ENCODE measurements at regions of chr12 and their contacts with region 1.

Region 1: GRCh38 chr12:100877776-100878175 is 83.2 kb downstream of the ANO4 start:
- DNase-seq: no peak
- H3K4me3 ChIP-seq: no peak overlapping the region
- H3K27ac ChIP-seq: no peak overlapping the region
- H3K4me1 ChIP-seq: no peaks in the 10 kb centered on the region
- H3K27me3 ChIP-seq: no peaks in the 10 kb centered on the region
- CTCF ChIP-seq: peak in 2 of 3 experiments; percentile 16 to 50; a peak in 2 of 4 replicates
- EP300 ChIP-seq: no peak
- POLR2A ChIP-seq: no peak
- RAD21 ChIP-seq: no peak

Region 2: DNA sequence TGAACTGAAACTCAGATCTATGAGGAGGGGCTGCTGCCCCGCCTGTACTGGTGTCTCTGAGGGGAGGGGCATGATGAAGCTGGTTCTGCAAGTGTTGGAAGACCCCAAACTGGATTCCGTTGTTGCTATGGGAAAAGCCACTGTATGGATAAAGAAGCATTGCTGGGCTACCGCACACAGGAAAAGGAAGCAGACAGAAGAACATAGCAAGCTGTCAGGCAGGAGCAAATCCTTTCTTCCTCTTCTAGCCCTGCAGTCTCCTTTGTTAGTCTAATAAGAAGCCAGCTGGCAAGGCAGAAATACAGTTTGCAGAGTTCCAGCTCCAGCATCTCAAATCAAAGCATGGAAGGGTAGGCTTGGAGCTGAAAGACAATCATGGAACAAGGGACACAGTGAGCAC is 430.4 kb before region 1 on chr12:
- CTCF ChIA-PET with region 1: no interaction called
- POLR2A ChIA-PET with region 1: no interaction called
- DNase-seq: no peak
- H3K4me3 ChIP-seq: no peak overlapping the region
- H3K27ac ChIP-seq: no peak overlapping the region
- H3K4me1 ChIP-seq: peaks cover 0 to 6% (median 0%) of the 10 kb centered on the region in 4 experiments; a peak in 2 of 7 replicates
- H3K27me3 ChIP-seq: no peaks in the 10 kb centered on the region
- CTCF ChIP-seq: no peak
- EP300 ChIP-seq: no peak
- POLR2A ChIP-seq: no peak
- RAD21 ChIP-seq: no peak

Region 3: DNA sequence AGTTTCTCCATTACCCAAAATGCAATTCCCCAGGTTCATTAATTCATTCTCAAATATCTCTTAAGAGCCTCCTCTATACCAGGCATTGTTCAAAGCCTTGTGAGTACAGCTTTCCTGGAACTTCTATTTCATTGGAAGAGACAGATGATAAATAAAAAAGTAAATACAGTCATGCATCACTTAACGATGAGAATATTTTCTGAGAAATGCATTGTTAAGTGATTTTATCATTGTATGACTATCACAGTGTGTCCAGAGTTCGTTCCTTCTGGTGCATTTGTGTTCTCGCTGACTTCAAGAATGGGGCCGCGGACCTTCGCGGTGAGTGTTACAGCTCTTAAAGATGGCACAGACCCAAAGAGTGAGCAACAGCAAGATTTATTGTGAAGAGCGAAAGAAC is 17.2 kb before region 1 on chr12:
- CTCF ChIA-PET with region 1: interaction called, 58 read pairs
- POLR2A ChIA-PET with region 1: no interaction called
- DNase-seq: no peak
- H3K4me3 ChIP-seq: no peak overlapping the region
- H3K27ac ChIP-seq: no peak overlapping the region
- H3K4me1 ChIP-seq: no peaks in the 10 kb centered on the region
- H3K27me3 ChIP-seq: no peaks in the 10 kb centered on the region
- CTCF ChIP-seq: no peak
- EP300 ChIP-seq: no peak
- POLR2A ChIP-seq: no peak
- RAD21 ChIP-seq: no peak

Region 4: DNA sequence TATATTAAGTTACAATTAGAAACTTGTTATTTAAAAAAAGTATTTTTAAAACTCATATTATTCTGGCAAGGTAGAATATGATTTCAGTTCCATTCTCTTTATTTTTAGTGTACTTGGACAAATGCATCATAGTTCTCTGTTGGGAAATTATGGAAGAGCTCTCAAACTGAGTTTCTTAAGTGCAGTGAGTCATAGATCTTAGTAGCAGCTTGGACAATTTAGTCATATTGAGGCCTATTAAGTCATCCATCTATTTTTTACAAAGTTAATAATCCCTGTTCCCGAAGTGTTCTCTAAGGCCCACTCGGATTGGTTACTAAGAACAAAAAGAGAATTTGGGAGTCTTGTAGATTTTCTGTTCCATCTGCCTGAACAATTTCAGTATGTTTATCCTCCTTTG is 30.7 kb after region 1 on chr12:
- CTCF ChIA-PET with region 1: interaction called, 13 read pairs
- POLR2A ChIA-PET with region 1: no interaction called
- DNase-seq: no peak
- H3K4me3 ChIP-seq: no peak overlapping the region
- H3K27ac ChIP-seq: no peak overlapping the region
- H3K4me1 ChIP-seq: no peaks in the 10 kb centered on the region
- H3K27me3 ChIP-seq: no peaks in the 10 kb centered on the region
- CTCF ChIP-seq: no peak
- EP300 ChIP-seq: no peak
- POLR2A ChIP-seq: no peak
- RAD21 ChIP-seq: no peak

Region 5: DNA sequence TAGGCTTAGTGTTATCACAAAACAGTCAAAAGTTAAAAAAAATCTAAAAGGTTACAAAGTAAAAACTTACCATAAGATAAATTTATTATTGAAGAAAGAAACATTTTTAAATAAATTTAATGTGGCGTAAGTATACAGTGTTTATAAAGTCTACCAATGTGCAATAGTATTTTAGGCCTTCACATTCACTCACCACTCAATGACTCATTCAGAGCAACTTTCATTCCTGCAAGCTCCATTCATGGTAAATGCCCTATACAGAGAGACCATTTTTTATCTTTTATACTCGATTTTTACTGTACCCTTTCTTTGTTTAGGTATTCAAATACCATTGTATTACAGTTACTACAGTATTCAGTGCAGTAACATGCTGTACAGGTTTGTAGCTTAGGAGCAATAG is 41.3 kb after region 1 on chr12:
- CTCF ChIA-PET with region 1: interaction called, 15 read pairs
- POLR2A ChIA-PET with region 1: no interaction called
- DNase-seq: no peak
- H3K4me3 ChIP-seq: no peak overlapping the region
- H3K27ac ChIP-seq: no peak overlapping the region
- H3K4me1 ChIP-seq: peaks cover 0 to 2% (median 0%) of the 10 kb centered on the region in 4 experiments; a peak in 2 of 7 replicates
- H3K27me3 ChIP-seq: no peaks in the 10 kb centered on the region
- CTCF ChIP-seq: no peak
- EP300 ChIP-seq: no peak
- POLR2A ChIP-seq: no peak
- RAD21 ChIP-seq: no peak

Region 6: DNA sequence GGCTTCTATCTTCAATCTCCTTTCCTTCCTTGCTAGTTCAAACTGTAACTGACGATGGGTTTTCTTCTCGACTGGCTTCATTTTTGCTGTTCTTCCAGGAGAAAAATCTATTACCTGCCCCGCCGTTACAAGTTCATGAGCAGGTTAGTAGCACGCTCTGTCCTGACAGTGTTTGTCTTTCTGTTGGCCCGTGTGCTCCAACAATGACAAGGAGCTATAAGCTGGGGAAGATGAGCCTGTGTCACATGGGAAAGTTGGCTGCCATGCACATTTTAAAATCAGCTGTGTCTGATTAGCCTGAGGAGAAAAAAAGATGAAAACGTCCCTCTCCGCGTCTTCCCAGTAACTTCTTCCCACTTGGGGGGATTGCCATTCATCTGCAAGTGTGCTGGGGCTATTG is 97.0 kb after region 1 on chr12:
- CTCF ChIA-PET with region 1: no interaction called
- POLR2A ChIA-PET with region 1: no interaction called
- DNase-seq: no peak
- H3K4me3 ChIP-seq: no peak overlapping the region
- H3K27ac ChIP-seq: no peak overlapping the region
- H3K4me1 ChIP-seq: peaks cover 0 to 6% (median 2%) of the 10 kb centered on the region in 4 experiments; a peak in 2 of 7 replicates
- H3K27me3 ChIP-seq: no peaks in the 10 kb centered on the region
- CTCF ChIP-seq: no peak
- EP300 ChIP-seq: no peak
- POLR2A ChIP-seq: no peak
- RAD21 ChIP-seq: no peak

Measured in H1 (cell line).